Naive thymus-derived CD4-positive, alpha-beta T cell (primary cell): ENCODE measurements at regions of chr13 and their contacts with region 1.

Region 1: DNA sequence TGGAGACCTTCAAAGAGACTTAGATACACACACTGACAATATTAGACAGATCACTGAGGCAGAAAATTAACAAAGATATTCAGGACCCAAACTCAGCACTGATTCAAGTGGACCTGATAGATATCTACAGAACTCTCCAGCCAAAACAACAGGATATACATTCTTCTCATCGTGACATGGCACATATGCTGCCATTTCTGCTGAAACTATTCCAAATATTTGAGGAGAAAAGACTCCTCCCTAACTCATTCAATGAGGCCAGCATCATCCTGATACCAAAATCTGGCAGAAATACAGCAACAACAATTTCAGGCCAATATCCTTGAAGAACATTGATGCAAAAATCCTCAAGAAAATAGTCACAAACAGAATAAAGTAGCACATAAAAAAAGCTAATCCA is 53.3 kb downstream of the TRPC4 start:
- DNase-seq: no peak
- ATAC-seq: no peak
- H3K4me3 ChIP-seq: no peak overlapping the region
- H3K4me3 Mint-ChIP-seq: no peak overlapping the region
- H3K27ac ChIP-seq: no peak overlapping the region
- H3K27ac Mint-ChIP-seq: no peak overlapping the region
- H3K4me1 ChIP-seq: no peaks in the 10 kb centered on the region
- H3K4me1 Mint-ChIP-seq: no peaks in the 10 kb centered on the region
- H3K27me3 ChIP-seq: no peaks in the 10 kb centered on the region
- H3K27me3 Mint-ChIP-seq: no peaks in the 10 kb centered on the region

Region 2: GRCh38 chr13:37835394-37835793 is 19.1 kb after region 1 on chr13:
- CTCF ChIA-PET with region 1: no interaction called
- POLR2A ChIA-PET with region 1: no interaction called
- intact Hi-C with region 1: loop called in 1 of 2 experiments (anchors 2 kb)
- DNase-seq: no peak
- ATAC-seq: no peak
- H3K4me3 ChIP-seq: no peak overlapping the region
- H3K4me3 Mint-ChIP-seq: no peak overlapping the region
- H3K27ac ChIP-seq: no peak overlapping the region
- H3K27ac Mint-ChIP-seq: no peak overlapping the region
- H3K4me1 ChIP-seq: no peaks in the 10 kb centered on the region
- H3K4me1 Mint-ChIP-seq: no peaks in the 10 kb centered on the region
- H3K27me3 ChIP-seq: no peaks in the 10 kb centered on the region
- H3K27me3 Mint-ChIP-seq: no peaks in the 10 kb centered on the region